ENCODE measurements at regions of chr14 and their contacts with region 1.

Region 1: DNA sequence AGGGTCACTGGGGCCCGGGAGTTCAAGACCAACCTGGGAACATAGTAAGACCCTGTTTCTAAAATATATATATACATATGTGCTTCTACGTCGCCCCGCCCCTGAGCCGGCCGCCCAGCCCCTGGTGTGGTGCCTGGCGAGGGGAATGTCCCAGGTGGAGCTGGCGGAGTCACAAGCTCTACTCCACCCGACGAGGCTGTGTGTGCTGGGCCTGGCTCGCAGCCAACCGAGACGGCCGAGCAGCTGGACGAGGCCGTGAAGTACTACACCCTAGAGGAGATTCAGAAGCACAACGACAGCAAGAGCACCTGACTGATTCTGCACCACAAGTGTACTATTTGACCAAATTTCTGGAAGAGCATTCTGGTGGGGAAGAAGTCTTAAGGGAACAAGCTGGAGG is 22.1 kb upstream of the ITPK1 start:
- DNase-seq: peak; percentile 32 to 77 (median 69)
- ATAC-seq: peak in 3 of 4 donors; percentile 69 to 82 (median 79)
- H3K4me3 ChIP-seq: no peak overlapping the region
- H3K27ac ChIP-seq: no peak overlapping the region
- H3K4me1 ChIP-seq: peaks cover 0 to 11% (median 0%) of the 10 kb centered on the region in 12 donors
- H3K27me3 ChIP-seq: no peaks in the 10 kb centered on the region
- CTCF ChIP-seq: peak in 4 of 12 donors; percentile 14 to 41 (median 36)
- POLR2A ChIP-seq: no peak

Region 2: DNA sequence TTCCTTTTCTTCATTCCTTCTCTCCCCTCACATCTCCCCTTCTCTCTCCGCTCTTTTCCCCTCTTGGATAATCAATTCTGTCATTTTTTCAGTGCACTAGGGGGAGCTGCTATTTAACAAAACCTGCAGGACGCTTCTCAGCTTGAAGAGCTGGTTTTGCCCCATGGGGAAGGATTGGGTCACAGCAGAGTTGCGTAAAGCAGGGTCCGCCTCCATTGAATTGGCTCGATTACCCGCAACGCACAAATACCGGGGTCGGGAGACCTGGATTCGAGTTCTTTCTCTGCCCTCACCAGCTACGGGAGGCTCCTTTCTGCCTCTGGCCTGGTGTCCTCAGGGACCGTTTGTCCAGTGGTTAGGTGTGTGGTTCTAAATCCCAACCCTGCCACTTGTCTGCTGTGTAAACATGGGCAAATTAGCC is 257.0 kb before region 1 on chr14:
- intact Hi-C with region 1: loop called in 4 of 10 experiments (anchors 2 to 10 kb)
- DNase-seq: no peak
- ATAC-seq: peak in 3 of 4 donors; percentile 19 to 38 (median 35)
- H3K4me3 ChIP-seq: no peak overlapping the region
- H3K27ac ChIP-seq: no peak overlapping the region
- H3K4me1 ChIP-seq: peaks cover 0 to 16% (median 10%) of the 10 kb centered on the region in 12 donors
- H3K27me3 ChIP-seq: peaks cover 0 to 15% (median 0%) of the 10 kb centered on the region in 9 donors
- CTCF ChIP-seq: peak in 11 of 12 donors; percentile 6 to 35 (median 25)
- POLR2A ChIP-seq: no peak

Region 3: DNA sequence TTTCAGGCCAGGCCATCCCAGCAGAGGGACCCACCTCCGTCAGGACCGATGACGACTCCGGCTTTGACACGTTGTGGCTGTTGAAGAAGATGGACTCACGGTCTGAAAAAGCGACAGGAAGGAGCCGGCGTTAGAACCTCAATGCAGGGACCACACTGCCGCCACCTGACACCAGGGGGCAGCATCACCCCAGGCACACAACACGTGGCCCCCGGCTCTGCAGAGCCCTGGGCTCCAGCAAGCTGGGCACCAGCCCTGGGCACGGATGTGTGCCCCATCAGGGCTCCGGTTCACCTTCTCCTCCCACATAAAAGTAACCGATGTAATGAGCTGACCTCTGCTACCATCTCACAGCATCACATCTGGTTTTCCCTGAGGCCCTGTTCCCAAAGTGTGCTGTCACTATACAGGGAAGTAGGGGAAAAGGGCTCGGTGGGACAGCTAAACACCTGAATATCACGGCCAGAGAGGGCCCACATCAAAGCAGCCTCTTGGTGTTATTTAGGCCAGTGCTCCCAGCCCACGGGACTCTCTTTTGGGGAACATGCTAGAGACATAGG is 185.9 kb before region 1 on chr14:
- intact Hi-C with region 1: loop called (anchors 1 to 5 kb)
- DNase-seq: peak; percentile 74 to 87 (median 79)
- ATAC-seq: peak; percentile 54 to 79 (median 76)
- H3K4me3 ChIP-seq: no peak overlapping the region
- H3K27ac ChIP-seq: peak overlapping the region; percentile 15 to 84 (median 68)
- H3K4me1 ChIP-seq: peaks cover 0 to 67% (median 19%) of the 10 kb centered on the region in 12 donors
- H3K27me3 ChIP-seq: no peaks in the 10 kb centered on the region
- CTCF ChIP-seq: peak; percentile 92 to 98 (median 96)
- POLR2A ChIP-seq: no peak

Region 4: GRCh38 chr14:92964124-92965109 is 173.4 kb before region 1 on chr14:
- intact Hi-C with region 1: loop called in 1 of 10 experiments (anchors 5 kb)
- DNase-seq: peak in 1 of 5 donors; percentile 55
- ATAC-seq: peak; percentile 44 to 68 (median 67)
- H3K4me3 ChIP-seq: no peak overlapping the region
- H3K27ac ChIP-seq: peak overlapping the region; percentile 32 to 80 (median 74)
- H3K4me1 ChIP-seq: peaks cover 0 to 43% (median 25%) of the 10 kb centered on the region in 12 donors
- H3K27me3 ChIP-seq: no peaks in the 10 kb centered on the region
- CTCF ChIP-seq: no peak
- POLR2A ChIP-seq: no peak

Region 5: GRCh38 chr14:92973261-92973797 is 164.5 kb before region 1 on chr14:
- intact Hi-C with region 1: loop called in 5 of 10 experiments (anchors 5 kb)
- DNase-seq: peak; percentile 79 to 89 (median 84)
- ATAC-seq: peak; percentile 91 to 95 (median 92)
- H3K4me3 ChIP-seq: no peak overlapping the region
- H3K27ac ChIP-seq: peak overlapping the region; percentile 10 to 90 (median 80)
- H3K4me1 ChIP-seq: peaks cover 0 to 45% (median 19%) of the 10 kb centered on the region in 12 donors
- H3K27me3 ChIP-seq: no peaks in the 10 kb centered on the region
- CTCF ChIP-seq: peak; percentile 52 to 87 (median 72)
- POLR2A ChIP-seq: no peak

Region 6: DNA sequence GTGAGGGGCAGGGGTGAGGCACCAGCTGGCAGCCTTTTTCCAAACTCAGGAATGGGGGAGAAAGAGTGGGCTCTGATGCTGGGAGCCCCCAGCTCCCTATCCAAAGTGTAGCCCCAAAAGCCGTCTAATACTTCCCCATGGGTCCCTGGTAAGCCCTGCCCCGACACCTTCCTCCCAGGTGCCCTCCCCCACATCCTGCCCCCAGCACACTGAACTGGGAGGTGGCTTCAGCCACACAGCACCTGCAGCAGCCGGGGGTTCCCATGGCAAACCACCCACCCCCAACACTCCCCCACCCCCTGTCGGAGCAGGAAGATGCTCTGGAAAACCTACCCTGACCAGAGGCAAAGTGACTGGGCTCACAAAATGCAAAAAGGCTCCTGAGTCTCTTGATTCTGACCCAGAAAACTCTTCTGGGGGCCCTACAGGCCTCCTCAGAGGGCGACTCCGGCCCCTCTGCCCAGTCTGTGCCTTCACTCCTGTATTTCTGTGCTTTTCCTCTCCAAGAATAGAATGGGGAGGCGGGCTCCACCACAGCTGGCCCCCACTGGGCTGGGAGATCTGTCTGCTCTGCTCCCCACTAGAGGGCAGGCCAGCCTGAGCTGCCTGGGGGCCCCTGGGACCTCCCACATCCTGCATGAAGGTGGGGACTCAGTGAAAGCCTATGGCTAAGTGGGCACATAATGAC is 103.7 kb before region 1 on chr14:
- intact Hi-C with region 1: loop called in 1 of 10 experiments (anchors 5 kb)
- DNase-seq: no peak
- ATAC-seq: peak in 3 of 4 donors; percentile 10 to 54 (median 36)
- H3K4me3 ChIP-seq: no peak overlapping the region
- H3K27ac ChIP-seq: peak overlapping the region in 5 of 12 donors; percentile 2 to 90 (median 29)
- H3K4me1 ChIP-seq: peaks cover 13 to 75% (median 50%) of the 10 kb centered on the region in 12 donors
- H3K27me3 ChIP-seq: no peaks in the 10 kb centered on the region
- CTCF ChIP-seq: peak in 10 of 12 donors; percentile 35 to 63 (median 50)
- POLR2A ChIP-seq: no peak